ENCODE measurements at regions of chrX and their contacts with region 1.

Region 1: DNA sequence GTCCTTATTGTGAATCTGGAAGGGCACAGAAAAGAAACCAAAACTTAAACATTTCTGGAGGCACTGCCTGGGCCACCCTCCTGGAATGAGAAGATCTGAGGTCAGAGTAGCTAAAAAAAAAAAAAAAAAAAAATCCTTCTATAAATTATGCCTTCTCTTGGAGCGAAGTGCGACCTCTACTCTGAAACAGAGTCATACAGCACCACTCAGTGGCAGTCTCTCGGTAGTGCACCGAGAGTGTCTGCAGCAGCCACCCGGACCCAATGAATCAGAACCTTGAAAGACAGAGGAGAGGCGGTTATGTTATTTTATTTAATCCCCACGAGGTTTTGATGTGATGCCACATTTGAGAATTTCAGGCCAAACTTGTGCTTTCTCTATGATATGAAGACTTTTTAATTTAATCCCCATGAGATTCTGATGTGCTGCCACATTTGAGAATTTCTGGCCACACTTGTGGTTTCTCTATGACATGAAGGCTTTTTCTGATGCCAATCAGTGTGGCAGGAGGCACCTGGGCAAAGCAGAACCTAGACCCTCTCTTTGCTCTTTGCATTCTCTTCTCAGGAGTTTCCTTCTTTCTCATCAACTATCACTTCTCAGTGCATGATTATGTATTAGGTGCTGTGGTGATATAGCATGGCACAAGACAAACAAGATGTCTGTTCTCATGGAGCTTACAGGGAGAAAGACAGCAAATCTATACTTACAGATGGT is 5.6 kb upstream of the CT47C1 start:
- DNase-seq: peak; percentile 72
- ATAC-seq: peak; percentile 86
- H3K4me3 Mint-ChIP-seq: no peak overlapping the region
- H3K27ac Mint-ChIP-seq: no peak overlapping the region
- H3K4me1 Mint-ChIP-seq: no peaks in the 10 kb centered on the region
- H3K27me3 Mint-ChIP-seq: no peaks in the 10 kb centered on the region

Region 2: DNA sequence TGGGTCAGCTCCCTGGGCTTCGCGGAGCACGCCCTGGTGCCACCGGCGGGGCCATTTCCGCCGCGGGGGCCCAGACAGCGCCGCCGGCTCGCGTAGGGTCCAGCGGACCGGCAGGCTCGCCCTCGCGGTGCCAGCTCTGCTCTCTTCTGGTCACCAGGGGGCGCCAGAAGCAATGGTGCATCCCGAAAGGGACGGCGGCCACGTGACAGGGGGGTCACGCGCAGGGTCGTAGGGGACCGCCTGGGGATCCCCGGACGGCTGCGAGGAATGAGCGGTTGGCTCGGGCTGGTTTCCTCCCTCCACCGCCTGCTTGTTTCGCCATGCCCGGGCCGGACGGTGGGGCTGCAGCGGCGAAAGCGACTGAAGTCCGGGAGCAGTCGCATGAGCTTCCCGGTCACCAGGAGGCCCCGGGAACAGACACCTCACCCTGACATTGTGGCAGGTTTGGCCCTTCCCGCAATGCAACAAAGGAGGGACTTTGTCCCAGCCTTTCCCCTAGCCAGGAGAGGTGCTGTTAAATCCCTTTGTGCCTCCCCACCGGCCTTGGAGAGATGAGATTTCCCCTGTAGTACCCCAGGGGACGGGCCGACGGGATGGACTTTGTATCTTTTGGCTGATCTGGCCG is 227.7 kb before region 1 on chrX:
- CTCF ChIA-PET with region 1: interaction called, 5 read pairs
- POLR2A ChIA-PET with region 1: no interaction called
- intact Hi-C with region 1: loop called in 1 of 2 experiments (anchors 2 kb)
- DNase-seq: peak; percentile 81
- ATAC-seq: peak; percentile 71
- H3K4me3 Mint-ChIP-seq: peak overlapping the region; percentile 26
- H3K27ac Mint-ChIP-seq: no peak overlapping the region
- H3K4me1 Mint-ChIP-seq: no peaks in the 10 kb centered on the region
- H3K27me3 Mint-ChIP-seq: peaks cover 20% of the 10 kb centered on the region

Region 3: GRCh38 chrX:118971376-118971951 is 95.7 kb before region 1 on chrX:
- CTCF ChIA-PET with region 1: no interaction called
- POLR2A ChIA-PET with region 1: no interaction called
- intact Hi-C with region 1: no loop called
- DNase-seq: no peak
- ATAC-seq: no peak
- H3K4me3 Mint-ChIP-seq: no peak overlapping the region
- H3K27ac Mint-ChIP-seq: no peak overlapping the region
- H3K4me1 Mint-ChIP-seq: peaks cover 8% of the 10 kb centered on the region
- H3K27me3 Mint-ChIP-seq: peaks cover 14% of the 10 kb centered on the region

Region 4: DNA sequence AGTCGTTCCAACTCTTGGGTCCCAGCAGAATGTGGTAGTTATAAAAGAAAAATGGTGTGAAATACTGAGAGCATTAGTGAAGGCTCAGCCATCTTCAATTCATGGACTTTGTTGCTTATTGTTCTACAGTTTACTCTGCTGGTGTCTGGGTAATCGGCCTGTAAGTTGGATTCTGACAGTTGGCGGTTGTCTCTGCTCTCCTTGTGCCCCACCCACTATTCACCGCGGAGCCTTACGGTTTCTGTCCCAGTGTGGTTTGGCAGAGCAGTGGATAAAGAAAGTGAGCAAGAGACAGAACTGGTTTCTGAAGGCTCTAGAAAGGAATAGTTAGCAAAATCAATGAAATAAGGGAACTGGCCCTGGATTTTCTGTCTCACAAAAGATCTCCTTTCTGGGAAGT is 83.7 kb before region 1 on chrX:
- CTCF ChIA-PET with region 1: no interaction called
- POLR2A ChIA-PET with region 1: no interaction called
- intact Hi-C with region 1: no loop called
- DNase-seq: no peak
- ATAC-seq: no peak
- H3K4me3 Mint-ChIP-seq: no peak overlapping the region
- H3K27ac Mint-ChIP-seq: no peak overlapping the region
- H3K4me1 Mint-ChIP-seq: no peaks in the 10 kb centered on the region
- H3K27me3 Mint-ChIP-seq: no peaks in the 10 kb centered on the region

Region 5: DNA sequence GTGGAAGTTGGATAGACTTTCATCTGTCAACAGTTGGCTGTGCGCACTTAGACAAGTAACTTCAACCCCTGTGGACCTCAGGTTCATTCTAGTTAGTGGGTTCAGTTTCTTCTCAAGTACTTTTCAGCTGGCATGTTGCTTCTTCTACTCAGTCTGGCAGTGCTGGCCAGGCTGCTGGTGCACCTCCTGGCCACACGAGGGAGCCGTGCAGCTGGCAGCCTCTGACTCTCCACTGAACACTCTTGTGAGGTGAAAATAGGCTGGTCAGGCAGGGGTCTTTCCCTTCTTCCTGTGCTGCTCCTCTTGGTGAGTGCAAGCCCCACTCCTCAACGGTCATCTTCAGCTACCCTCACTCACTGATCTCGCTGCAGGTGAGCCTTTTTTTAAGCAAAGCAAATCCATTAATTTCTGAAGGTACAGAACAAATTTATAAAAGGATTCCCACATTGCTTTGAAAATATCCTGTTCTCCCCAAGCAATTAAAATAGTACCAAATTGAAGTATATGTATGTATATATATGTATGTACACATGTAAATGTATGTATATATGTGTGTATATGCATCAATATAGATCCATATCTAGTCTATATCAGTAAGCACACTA is 62.2 kb before region 1 on chrX:
- CTCF ChIA-PET with region 1: interaction called, 14 read pairs
- POLR2A ChIA-PET with region 1: no interaction called
- intact Hi-C with region 1: loop called (anchors 1 to 2 kb)
- DNase-seq: peak; percentile 68
- ATAC-seq: peak; percentile 61
- H3K4me3 Mint-ChIP-seq: no peak overlapping the region
- H3K27ac Mint-ChIP-seq: no peak overlapping the region
- H3K4me1 Mint-ChIP-seq: no peaks in the 10 kb centered on the region
- H3K27me3 Mint-ChIP-seq: no peaks in the 10 kb centered on the region

Region 6: DNA sequence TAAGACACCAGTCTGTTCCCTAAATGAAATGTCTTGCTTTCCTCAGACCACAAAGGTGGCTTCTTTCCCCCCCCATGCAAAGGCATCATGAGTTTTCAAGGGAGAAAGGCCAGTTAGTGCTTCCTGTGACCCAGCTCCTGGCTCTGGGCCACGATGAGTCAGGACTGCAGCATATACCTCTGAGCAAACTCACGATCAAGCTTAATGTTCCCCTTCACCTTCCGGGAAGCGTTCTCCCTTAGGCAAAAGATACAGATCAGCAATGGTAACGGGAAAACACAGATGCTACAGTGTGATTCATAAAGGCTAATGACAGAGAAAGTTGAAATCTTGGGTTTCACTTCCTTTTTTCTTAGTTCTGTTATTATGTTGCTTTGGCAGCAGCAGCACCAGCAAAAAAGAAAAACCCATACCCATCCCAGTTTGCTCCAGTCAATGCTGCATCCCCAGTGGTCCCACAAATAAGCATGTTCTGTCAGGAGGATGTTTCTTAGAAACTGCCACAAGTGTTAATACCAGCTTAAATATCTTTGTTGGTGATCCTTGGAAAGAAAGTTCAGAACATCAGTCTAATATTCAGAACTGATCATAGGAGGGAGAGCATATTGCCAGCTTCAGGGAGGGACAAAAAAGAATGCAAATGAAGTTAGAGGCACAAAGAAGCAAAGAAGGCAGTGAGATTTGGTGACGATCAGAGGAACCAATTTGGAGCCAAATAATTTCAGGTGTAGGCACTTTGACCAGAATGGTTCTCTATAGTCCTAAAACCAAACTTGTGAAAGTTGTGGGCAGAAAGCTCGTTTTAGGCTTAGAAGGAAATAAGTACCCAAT is 51.6 kb before region 1 on chrX:
- CTCF ChIA-PET with region 1: interaction called, 3 read pairs
- POLR2A ChIA-PET with region 1: no interaction called
- intact Hi-C with region 1: loop called (anchors 2 kb)
- DNase-seq: peak; percentile 75
- ATAC-seq: peak; percentile 98
- H3K4me3 Mint-ChIP-seq: no peak overlapping the region
- H3K27ac Mint-ChIP-seq: peak overlapping the region; percentile 65
- H3K4me1 Mint-ChIP-seq: peaks cover 14% of the 10 kb centered on the region
- H3K27me3 Mint-ChIP-seq: no peaks in the 10 kb centered on the region

Region 7: DNA sequence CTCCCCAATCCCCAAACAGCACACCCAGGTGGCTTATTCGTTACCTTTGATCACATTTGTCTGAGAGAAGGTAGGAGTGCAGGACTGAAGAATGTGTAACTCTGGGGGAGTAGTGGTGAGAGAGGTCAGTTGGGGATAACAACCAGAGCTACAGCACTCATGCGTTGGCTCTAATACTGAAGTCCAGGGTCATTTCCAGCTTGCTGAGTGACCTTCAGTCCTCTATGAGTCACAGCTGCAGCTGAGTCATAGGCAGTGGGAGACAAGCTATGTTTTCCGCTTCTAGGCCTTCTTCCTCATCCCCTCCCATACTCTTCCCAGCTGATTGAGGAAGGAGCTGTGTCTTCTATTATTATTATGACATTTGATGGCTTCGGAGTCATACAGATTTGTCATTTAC is 26.0 kb before region 1 on chrX:
- CTCF ChIA-PET with region 1: no interaction called
- POLR2A ChIA-PET with region 1: no interaction called
- intact Hi-C with region 1: no loop called
- DNase-seq: no peak
- ATAC-seq: no peak
- H3K4me3 Mint-ChIP-seq: no peak overlapping the region
- H3K27ac Mint-ChIP-seq: no peak overlapping the region
- H3K4me1 Mint-ChIP-seq: no peaks in the 10 kb centered on the region
- H3K27me3 Mint-ChIP-seq: no peaks in the 10 kb centered on the region